Panc1 (cell line): ENCODE measurements at regions of chr10 and their contacts with region 1.

Region 1: GRCh38 chr10:122844146-122844545 is 1.5 kb downstream of the CUZD1 start:
- DNase-seq: no peak
- ATAC-seq: no peak
- H3K4me3 ChIP-seq: no peak overlapping the region
- H3K27ac ChIP-seq: no peak overlapping the region
- H3K4me1 ChIP-seq: no peaks in the 10 kb centered on the region
- H3K27me3 ChIP-seq: no peaks in the 10 kb centered on the region
- CTCF ChIP-seq: no peak

Region 2: GRCh38 chr10:122362621-122363020 is 481.5 kb before region 1 on chr10:
- CTCF ChIA-PET with region 1: no interaction called
- POLR2A ChIA-PET with region 1: interaction called, 11 read pairs
- in situ Hi-C with region 1: no loop called
- intact Hi-C with region 1: no loop called
- DNase-seq: no peak
- ATAC-seq: no peak
- H3K4me3 ChIP-seq: no peak overlapping the region
- H3K27ac ChIP-seq: no peak overlapping the region
- H3K4me1 ChIP-seq: no peaks in the 10 kb centered on the region
- H3K27me3 ChIP-seq: no peaks in the 10 kb centered on the region
- CTCF ChIP-seq: no peak